ENCODE measurements at regions of chr16 and their contacts with region 1.

Region 1: GRCh38 chr16:10871149-10871991 is 5.6 kb upstream of the CIITA start:
- DNase-seq: peak; percentile 86
- ATAC-seq: peak; percentile 78
- H3K4me3 ChIP-seq: no peak overlapping the region
- H3K27ac ChIP-seq: peak overlapping the region; percentile 65
- H3K4me1 ChIP-seq: peaks cover 84% of the 10 kb centered on the region
- H3K27me3 ChIP-seq: no peaks in the 10 kb centered on the region
- CTCF ChIP-seq: no peak
- EP300 ChIP-seq: peak; percentile 88 to 90
- POLR2A ChIP-seq: 0 out of 2 replicates have a peak, but pooled peaks have one; percentile 27
- RAD21 ChIP-seq: peak; percentile 16; the same call in 1 of the 2 replicates

Region 2: DNA sequence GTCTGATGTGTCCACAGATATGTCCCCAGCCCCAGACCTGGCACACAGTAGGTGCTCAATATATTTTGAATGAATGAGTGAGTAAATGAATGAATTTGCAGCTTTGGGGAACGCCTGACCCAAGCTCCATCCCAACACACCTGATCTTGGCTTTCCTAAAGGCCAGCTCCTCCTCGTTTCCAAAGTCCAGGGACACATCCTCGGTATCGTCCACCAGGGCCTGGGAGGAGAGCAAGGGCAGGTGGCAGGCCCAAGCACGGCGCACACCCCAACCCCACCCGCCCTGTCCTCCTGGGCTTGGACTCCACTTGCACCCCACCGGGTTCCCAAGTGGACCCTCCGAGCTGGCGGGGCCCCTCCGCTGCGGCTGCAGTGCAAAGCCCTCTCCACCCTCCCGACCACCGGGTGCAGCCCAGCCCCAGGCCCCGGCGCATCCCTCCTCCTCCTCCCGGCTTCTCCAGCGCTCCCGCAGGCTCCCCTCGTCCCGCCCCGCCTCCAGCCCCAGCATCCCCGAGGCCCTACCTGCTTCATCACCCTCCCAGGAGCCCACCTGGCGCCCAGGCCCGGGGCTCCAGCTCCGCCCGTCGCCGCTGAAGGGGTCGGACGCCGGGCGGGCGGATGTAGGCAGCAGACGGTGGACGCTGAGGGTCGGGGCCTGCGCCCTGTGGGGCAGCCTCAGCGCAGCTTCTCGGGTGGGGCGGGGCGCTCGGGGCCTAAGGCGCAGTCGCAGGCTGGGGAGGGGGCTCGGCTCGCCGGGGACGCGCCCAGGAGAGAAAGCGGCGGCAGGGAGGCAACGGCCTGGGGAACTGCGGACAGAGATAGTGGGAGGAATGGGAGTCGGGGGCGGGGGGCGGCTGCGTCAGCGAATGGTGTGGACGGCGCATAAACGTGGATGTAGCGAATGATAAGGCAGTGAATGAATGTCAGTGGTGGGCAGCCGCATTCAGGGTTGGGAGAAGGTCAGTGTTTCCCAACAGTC is 53.1 kb before region 1 on chr16 and contains the start of gene TVP23A:
- CTCF ChIA-PET with region 1: interaction called, 7 read pairs
- POLR2A ChIA-PET with region 1: interaction called, 6 read pairs
- RAD21 ChIA-PET with region 1: interaction called, 44 read pairs
- SMC1A ChIA-PET with region 1: interaction called, 17 read pairs
- in situ Hi-C with region 1: no loop called
- intact Hi-C with region 1: loop called (anchors 1 kb)
- DNase-seq: no peak
- ATAC-seq: no peak
- H3K4me3 ChIP-seq: no peak within 1 kb of the TSS
- H3K27ac ChIP-seq: peak within 1 kb of the TSS; percentile 38; the same call in 1 of the 2 replicates
- H3K4me1 ChIP-seq: peaks cover 37% of the 10 kb centered on the region
- H3K27me3 ChIP-seq: no peaks in the 10 kb centered on the region
- CTCF ChIP-seq: no peak
- EP300 ChIP-seq: no peak
- POLR2A ChIP-seq: no peak
- RAD21 ChIP-seq: no peak
- polyA plus RNA-seq, gene TVP23A: 4.6 to 6.4 TPM

Region 3: GRCh38 chr16:10840703-10841102 is 30.7 kb before region 1 on chr16:
- CTCF ChIA-PET with region 1: interaction called, 4 read pairs
- POLR2A ChIA-PET with region 1: interaction called, 25 read pairs
- RAD21 ChIA-PET with region 1: interaction called, 19 read pairs
- SMC1A ChIA-PET with region 1: interaction called, 75 read pairs
- in situ Hi-C with region 1: no loop called
- intact Hi-C with region 1: loop called (anchors 1 kb)
- DNase-seq: no peak
- ATAC-seq: no peak
- H3K4me3 ChIP-seq: no peak overlapping the region
- H3K27ac ChIP-seq: no peak overlapping the region
- H3K4me1 ChIP-seq: peaks cover 25% of the 10 kb centered on the region
- H3K27me3 ChIP-seq: no peaks in the 10 kb centered on the region
- CTCF ChIP-seq: no peak
- EP300 ChIP-seq: no peak
- POLR2A ChIP-seq: no peak
- RAD21 ChIP-seq: no peak

Region 4: DNA sequence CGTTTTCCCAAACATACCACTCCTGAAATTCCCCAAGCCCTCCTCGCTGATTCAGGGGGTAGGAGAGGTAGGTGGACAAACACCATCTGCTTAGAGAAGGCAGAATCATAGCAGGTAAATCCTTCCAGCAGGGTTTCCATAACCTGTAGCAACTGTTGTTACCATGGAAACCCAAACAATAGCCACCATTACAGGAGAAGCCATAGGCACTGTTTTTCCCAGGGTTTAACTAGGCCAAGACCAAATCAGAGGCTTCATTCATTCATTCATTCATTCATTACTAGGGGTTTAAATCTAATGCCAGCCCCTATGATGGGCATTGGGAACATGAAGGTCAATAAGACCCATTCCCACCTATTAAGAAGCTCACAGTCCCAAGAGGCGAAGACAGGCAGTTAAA is 19.9 kb before region 1 on chr16:
- CTCF ChIA-PET with region 1: interaction called, 3 read pairs
- POLR2A ChIA-PET with region 1: interaction called, 6 read pairs
- RAD21 ChIA-PET with region 1: interaction called, 6 read pairs
- SMC1A ChIA-PET with region 1: interaction called, 12 read pairs
- in situ Hi-C with region 1: no loop called
- intact Hi-C with region 1: no loop called
- DNase-seq: no peak
- ATAC-seq: no peak
- H3K4me3 ChIP-seq: no peak overlapping the region
- H3K27ac ChIP-seq: no peak overlapping the region
- H3K4me1 ChIP-seq: peaks cover 14% of the 10 kb centered on the region; the same call in 1 of the 2 replicates
- H3K27me3 ChIP-seq: no peaks in the 10 kb centered on the region
- CTCF ChIP-seq: no peak
- EP300 ChIP-seq: no peak
- POLR2A ChIP-seq: no peak
- RAD21 ChIP-seq: no peak

Region 5: GRCh38 chr16:10888320-10888937 is 17.1 kb after region 1 on chr16:
- CTCF ChIA-PET with region 1: interaction called, 73 read pairs
- POLR2A ChIA-PET with region 1: interaction called, 133 read pairs
- RAD21 ChIA-PET with region 1: interaction called, 142 read pairs
- SMC1A ChIA-PET with region 1: interaction called, 133 read pairs
- in situ Hi-C with region 1: no loop called
- intact Hi-C with region 1: loop called (anchors 2 kb)
- DNase-seq: no peak
- ATAC-seq: peak; percentile 7; the same call in 1 of the 3 replicates
- H3K4me3 ChIP-seq: peak overlapping the region; percentile 67
- H3K27ac ChIP-seq: peak overlapping the region; percentile 59
- H3K4me1 ChIP-seq: peaks cover 96% of the 10 kb centered on the region
- H3K27me3 ChIP-seq: no peaks in the 10 kb centered on the region
- CTCF ChIP-seq: no peak
- EP300 ChIP-seq: no peak; a peak in 1 of 4 replicates
- POLR2A ChIP-seq: no peak
- RAD21 ChIP-seq: 0 out of 2 replicates have a peak, but pooled peaks have one; percentile 17